ENCODE measurements at regions of chr6 and their contacts with region 1.

Region 1: DNA sequence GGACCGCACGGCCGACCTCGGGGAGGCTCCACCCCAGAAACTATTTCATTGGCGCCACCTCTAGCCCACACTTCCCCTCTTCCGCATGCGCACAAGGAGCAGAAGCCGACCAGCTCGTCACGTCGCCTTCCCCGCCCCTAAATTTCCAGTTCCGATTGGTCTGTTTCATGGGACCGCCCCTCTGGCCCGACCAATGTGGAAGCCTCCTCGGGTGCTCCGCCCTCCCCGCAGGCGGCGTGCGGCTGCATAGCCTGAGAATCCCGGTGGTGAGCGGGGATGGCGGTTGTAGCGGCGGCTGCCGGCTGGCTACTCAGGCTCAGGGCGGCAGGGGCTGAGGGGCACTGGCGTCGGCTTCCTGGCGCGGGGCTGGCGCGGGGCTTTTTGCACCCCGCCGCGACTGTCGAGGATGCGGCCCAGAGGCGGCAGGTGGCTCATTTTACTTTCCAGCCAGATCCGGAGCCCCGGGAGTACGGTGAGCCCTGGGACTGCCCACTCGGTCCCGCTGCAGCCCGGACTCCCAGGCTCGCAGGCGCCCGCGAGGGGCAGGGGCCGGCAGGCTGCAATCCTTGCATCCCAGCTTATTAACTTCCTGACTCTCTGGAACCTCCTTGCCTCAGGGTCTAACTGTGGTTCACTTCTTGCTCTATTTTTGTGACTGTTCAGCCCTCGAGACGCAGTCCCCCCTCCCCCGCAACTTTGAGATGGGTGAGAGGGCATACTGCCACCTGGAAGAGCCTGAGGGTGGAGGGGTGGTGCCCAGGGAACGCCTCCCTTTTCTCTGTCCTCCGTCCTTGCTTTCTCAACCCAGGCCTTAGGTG is at the start of gene BCKDHB:
- DNase-seq: peak; percentile 92
- ATAC-seq: peak; percentile 99
- H3K4me3 ChIP-seq: peak within 1 kb of the TSS; percentile 94
- H3K27ac ChIP-seq: peak within 1 kb of the TSS; percentile 55
- H3K4me1 ChIP-seq: no peaks in the 10 kb centered on the region; the same call in 1 of the 2 replicates
- H3K27me3 ChIP-seq: no peaks in the 10 kb centered on the region
- CTCF ChIP-seq: no peak
- EP300 ChIP-seq: no peak
- POLR2A ChIP-seq: peak; percentile 94
- RAD21 ChIP-seq: no peak
- polyA plus RNA-seq, gene BCKDHB: 12.9 to 34.8 TPM

Region 2: DNA sequence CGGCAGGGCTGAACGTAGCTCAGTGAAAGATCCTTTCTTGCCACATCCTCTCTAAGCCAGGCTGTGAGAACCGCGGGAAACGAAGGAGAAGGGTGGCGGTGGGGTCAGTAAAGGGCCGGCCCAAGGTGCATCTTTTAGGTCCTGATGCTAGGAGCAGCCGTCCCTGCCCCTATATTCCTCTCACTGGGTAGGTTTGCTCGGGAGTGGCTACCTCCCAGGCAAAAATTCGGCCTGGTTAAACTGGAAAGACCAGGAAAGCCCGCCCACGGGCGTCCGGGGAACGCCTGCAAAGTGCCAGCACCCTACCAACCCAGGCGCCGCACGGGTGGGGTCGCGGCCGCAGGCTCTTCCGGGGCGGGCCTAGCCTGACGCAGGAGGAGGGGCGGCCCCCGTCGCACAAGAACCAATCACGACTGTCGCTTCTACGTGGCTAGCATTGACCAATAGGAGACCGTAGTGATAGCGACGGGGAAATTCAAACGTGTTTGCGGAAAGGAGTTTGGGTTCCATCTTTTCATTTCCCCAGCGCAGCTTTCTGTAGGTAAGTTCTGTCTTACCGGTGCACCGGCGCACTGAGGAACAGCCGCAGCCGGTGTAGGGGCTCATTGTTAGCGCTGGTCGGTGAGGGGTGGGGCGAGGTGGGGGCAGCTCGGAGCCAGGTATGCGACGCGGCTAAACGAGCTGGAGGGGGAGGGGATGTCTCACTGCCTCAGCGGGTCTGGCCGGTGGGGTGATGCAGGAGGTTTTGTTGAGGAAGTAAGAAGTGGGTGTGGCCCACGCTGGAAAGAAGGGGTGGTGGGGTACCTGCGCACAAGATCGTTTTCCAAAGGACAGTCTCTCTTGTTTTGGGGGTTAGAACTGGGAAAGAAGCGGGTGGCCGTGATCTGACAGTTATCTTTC is 102.2 kb before region 1 on chr6 and contains the start of gene TTK:
- CTCF ChIA-PET with region 1: interaction called, 3 read pairs
- POLR2A ChIA-PET with region 1: interaction called, 6 read pairs
- RAD21 ChIA-PET with region 1: no interaction called
- SMC1A ChIA-PET with region 1: no interaction called
- in situ Hi-C with region 1: no loop called
- intact Hi-C with region 1: loop called (anchors 2 kb)
- DNase-seq: peak; percentile 89
- ATAC-seq: peak; percentile 99
- H3K4me3 ChIP-seq: peak within 1 kb of the TSS; percentile 78
- H3K27ac ChIP-seq: peak within 1 kb of the TSS; percentile 79
- H3K4me1 ChIP-seq: no peaks in the 10 kb centered on the region; the same call in 1 of the 2 replicates
- H3K27me3 ChIP-seq: no peaks in the 10 kb centered on the region
- CTCF ChIP-seq: no peak
- EP300 ChIP-seq: 0 out of 4 replicates have a peak, but pooled peaks of 1 of the 2 experiments have one; percentile 13
- POLR2A ChIP-seq: peak; percentile 77
- RAD21 ChIP-seq: no peak
- polyA plus RNA-seq, gene TTK: 23.8 to 25.6 TPM

Region 3: GRCh38 chr6:80060774-80061173 is 45.9 kb before region 1 on chr6:
- CTCF ChIA-PET with region 1: no interaction called
- POLR2A ChIA-PET with region 1: no interaction called
- RAD21 ChIA-PET with region 1: no interaction called
- SMC1A ChIA-PET with region 1: no interaction called
- in situ Hi-C with region 1: no loop called
- intact Hi-C with region 1: no loop called
- DNase-seq: no peak
- ATAC-seq: no peak
- H3K4me3 ChIP-seq: no peak overlapping the region
- H3K27ac ChIP-seq: no peak overlapping the region
- H3K4me1 ChIP-seq: no peaks in the 10 kb centered on the region
- H3K27me3 ChIP-seq: no peaks in the 10 kb centered on the region
- CTCF ChIP-seq: no peak
- EP300 ChIP-seq: no peak
- POLR2A ChIP-seq: no peak
- RAD21 ChIP-seq: no peak

Region 4: GRCh38 chr6:80094017-80094416 is 12.6 kb before region 1 on chr6:
- CTCF ChIA-PET with region 1: interaction called, 13 read pairs
- POLR2A ChIA-PET with region 1: no interaction called
- RAD21 ChIA-PET with region 1: no interaction called
- SMC1A ChIA-PET with region 1: interaction called, 4 read pairs
- in situ Hi-C with region 1: no loop called
- intact Hi-C with region 1: no loop called
- DNase-seq: no peak
- ATAC-seq: peak; percentile 58
- H3K4me3 ChIP-seq: no peak overlapping the region
- H3K27ac ChIP-seq: no peak overlapping the region
- H3K4me1 ChIP-seq: 0 out of 2 replicates have a peak, but pooled peaks cover 2% of the 10 kb centered on the region
- H3K27me3 ChIP-seq: no peaks in the 10 kb centered on the region
- CTCF ChIP-seq: peak; percentile 28 to 58 (median 46); a peak in 5 of 6 replicates
- EP300 ChIP-seq: no peak
- POLR2A ChIP-seq: no peak
- RAD21 ChIP-seq: peak; percentile 67